ENCODE measurements at regions of chr1 and their contacts with region 1.

Region 1: DNA sequence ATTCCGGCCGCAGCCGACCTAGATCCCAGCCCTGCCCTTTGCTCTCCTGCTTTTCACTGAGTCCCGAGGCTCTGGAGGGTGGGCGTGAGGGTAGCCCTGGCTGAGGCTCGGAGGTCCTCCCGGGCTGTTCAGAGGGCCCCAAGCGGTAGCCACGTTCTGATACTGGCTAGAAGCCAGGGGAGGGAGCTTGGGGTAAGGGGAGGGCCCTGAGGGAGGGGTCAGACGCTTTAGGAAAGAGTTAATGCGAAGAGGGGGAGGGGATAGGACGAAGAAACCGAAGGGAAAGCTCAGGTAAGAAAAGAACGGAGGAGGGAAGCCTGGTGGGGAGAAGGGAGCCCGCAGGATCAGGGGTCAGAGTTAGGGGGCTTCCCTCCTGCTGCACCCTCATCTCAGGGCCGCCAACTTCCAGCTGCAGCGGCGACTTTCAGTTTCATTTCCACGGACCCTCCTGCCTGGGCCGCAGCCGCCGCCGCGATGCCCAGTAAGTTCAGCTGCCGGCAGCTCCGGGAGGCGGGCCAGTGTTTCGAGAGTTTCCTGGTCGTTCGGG is at the start of gene MOV10:
- DNase-seq: peak; percentile 74
- CTCF ChIP-seq: no peak

Region 2: DNA sequence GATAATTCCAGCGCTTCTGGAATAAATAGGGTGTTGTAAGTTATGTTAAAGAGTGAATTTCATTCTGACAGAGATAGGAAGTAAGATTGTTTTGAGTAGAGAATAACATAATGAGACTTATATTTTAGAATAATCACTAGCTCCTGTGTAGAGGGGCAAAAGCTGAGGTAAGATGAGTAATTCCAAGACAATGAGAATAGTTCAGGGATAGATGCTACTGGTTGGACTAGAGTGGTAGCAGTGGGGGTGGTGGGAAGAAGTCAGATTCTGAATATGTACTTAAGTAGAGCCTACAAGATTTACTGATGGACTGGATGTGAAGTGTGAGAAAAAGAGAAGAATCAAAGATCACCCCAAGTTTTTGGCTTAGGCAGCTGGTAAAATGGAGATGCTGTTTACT is 23.3 kb before region 1 on chr1:
- CTCF ChIA-PET with region 1: interaction called, 10 read pairs
- POLR2A ChIA-PET with region 1: no interaction called
- DNase-seq: no peak
- CTCF ChIP-seq: no peak

Region 3: GRCh38 chr1:112700290-112701226 is 26.0 kb after region 1 on chr1:
- CTCF ChIA-PET with region 1: interaction called, 35 read pairs
- POLR2A ChIA-PET with region 1: interaction called, 4 read pairs
- DNase-seq: peak; percentile 79
- CTCF ChIP-seq: no peak

Region 4: GRCh38 chr1:112706908-112707663 is 32.6 kb after region 1 on chr1 and contains the start of gene RHOC:
- CTCF ChIA-PET with region 1: interaction called, 10 read pairs
- POLR2A ChIA-PET with region 1: interaction called, 4 read pairs
- DNase-seq: peak; percentile 90
- CTCF ChIP-seq: peak; percentile 96

Region 5: DNA sequence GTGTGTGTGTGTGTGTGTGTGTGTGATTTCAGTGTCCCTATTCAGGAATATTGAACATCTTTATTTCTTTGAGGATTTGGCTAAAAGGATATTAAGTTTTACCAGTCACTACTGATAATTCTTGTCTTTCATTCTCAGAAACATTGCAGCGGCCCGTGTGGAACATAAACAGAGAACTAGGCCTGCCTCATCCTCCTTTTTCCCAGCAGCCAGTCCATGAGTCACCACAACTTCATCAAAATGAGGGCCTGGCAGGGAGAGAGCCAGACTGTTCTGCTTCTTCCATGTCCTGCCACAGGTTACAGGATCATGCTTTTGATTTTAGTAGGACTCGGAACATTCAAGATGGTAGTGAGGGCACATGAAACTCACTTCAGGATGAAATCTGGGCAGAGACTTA is 449.2 kb after region 1 on chr1:
- CTCF ChIA-PET with region 1: no interaction called
- POLR2A ChIA-PET with region 1: no interaction called
- DNase-seq: no peak
- CTCF ChIP-seq: no peak

Measured in GM10248 (cell line).